ENCODE measurements at regions of chr1 and their contacts with region 1.

Region 1: DNA sequence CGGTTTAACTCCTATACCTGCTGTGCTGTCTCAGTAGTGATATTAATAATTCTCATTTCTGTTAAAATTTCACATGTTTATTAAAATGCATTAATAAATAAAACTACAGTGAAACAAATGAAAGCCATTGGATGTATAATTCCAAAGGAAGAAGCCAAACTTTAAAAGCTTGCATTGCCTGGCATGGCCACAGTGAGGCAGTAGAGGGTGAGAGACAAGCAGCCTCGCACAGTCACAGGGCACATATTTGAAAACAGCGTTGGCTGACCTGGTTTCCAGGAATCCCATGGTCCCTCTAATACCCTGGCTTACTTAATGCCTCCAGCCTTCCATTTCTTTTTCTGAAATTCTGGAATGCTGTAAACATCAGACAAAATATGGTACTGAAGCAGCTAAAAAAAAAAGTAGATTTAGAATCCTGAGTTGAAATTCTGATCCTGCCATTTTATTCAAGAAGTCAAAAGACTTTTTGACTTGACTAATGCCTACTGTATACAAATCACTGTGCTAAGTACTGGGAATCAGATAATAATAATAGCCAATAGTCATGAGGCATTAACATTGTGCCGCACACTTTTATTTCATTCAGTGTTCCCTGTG is 6.7 kb upstream of the RNASEL start:
- DNase-seq: peak; percentile 80
- H3K4me3 Mint-ChIP-seq: no peak overlapping the region
- H3K27ac Mint-ChIP-seq: no peak overlapping the region
- H3K4me1 Mint-ChIP-seq: peaks cover 6% of the 10 kb centered on the region
- H3K27me3 Mint-ChIP-seq: no peaks in the 10 kb centered on the region
- CTCF ChIP-seq: peak; percentile 92

Region 2: GRCh38 chr1:182446033-182446669 is 149.6 kb before region 1 on chr1:
- CTCF ChIA-PET with region 1: interaction called, 25 read pairs
- POLR2A ChIA-PET with region 1: interaction called, 3 read pairs
- intact Hi-C with region 1: loop called (anchors 1 kb)
- DNase-seq: peak; percentile 81
- H3K4me3 Mint-ChIP-seq: no peak overlapping the region
- H3K27ac Mint-ChIP-seq: no peak overlapping the region
- H3K4me1 Mint-ChIP-seq: peaks cover 6% of the 10 kb centered on the region
- H3K27me3 Mint-ChIP-seq: no peaks in the 10 kb centered on the region
- CTCF ChIP-seq: peak; percentile 89

Region 3: GRCh38 chr1:182457844-182458243 is 137.9 kb before region 1 on chr1:
- CTCF ChIA-PET with region 1: interaction called, 12 read pairs
- POLR2A ChIA-PET with region 1: no interaction called
- intact Hi-C with region 1: no loop called
- DNase-seq: no peak
- H3K4me3 Mint-ChIP-seq: no peak overlapping the region
- H3K27ac Mint-ChIP-seq: no peak overlapping the region
- H3K4me1 Mint-ChIP-seq: peaks cover 7% of the 10 kb centered on the region
- H3K27me3 Mint-ChIP-seq: peaks cover 25% of the 10 kb centered on the region
- CTCF ChIP-seq: no peak

Region 4: GRCh38 chr1:182527680-182528079 is 68.1 kb before region 1 on chr1:
- CTCF ChIA-PET with region 1: no interaction called
- POLR2A ChIA-PET with region 1: no interaction called
- intact Hi-C with region 1: no loop called
- DNase-seq: no peak
- H3K4me3 Mint-ChIP-seq: no peak overlapping the region
- H3K27ac Mint-ChIP-seq: no peak overlapping the region
- H3K4me1 Mint-ChIP-seq: no peaks in the 10 kb centered on the region
- H3K27me3 Mint-ChIP-seq: peaks cover 19% of the 10 kb centered on the region
- CTCF ChIP-seq: no peak

Region 5: DNA sequence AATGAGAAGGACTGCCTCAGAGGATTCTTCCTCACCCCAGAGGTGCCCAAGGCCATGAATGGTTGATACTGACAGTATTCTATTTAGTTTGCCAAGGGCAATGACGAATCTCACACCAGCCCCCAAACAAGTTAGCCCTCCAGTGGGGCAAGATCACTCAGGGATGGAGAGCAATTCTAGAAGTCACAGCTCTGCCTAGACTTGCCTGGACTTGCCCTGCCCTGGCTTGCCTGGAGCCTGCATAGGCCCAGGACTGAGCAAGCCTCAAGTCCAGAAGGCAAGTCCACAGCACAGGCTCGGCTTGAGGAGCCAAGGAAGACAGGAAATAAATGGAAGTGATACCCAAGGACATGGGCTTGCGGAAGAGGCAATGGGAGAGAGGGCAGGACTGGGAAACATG is 48.0 kb after region 1 on chr1:
- CTCF ChIA-PET with region 1: interaction called, 10 read pairs
- POLR2A ChIA-PET with region 1: no interaction called
- intact Hi-C with region 1: no loop called
- DNase-seq: peak; percentile 81
- H3K4me3 Mint-ChIP-seq: no peak overlapping the region
- H3K27ac Mint-ChIP-seq: peak overlapping the region; percentile 95
- H3K4me1 Mint-ChIP-seq: peaks cover 8% of the 10 kb centered on the region
- H3K27me3 Mint-ChIP-seq: no peaks in the 10 kb centered on the region
- CTCF ChIP-seq: no peak

Region 6: GRCh38 chr1:182795563-182796228 is 200.0 kb after region 1 on chr1:
- CTCF ChIA-PET with region 1: interaction called, 991 read pairs
- POLR2A ChIA-PET with region 1: interaction called, 151 read pairs
- intact Hi-C with region 1: no loop called
- DNase-seq: no peak
- H3K4me3 Mint-ChIP-seq: no peak overlapping the region
- H3K27ac Mint-ChIP-seq: no peak overlapping the region
- H3K4me1 Mint-ChIP-seq: no peaks in the 10 kb centered on the region
- H3K27me3 Mint-ChIP-seq: no peaks in the 10 kb centered on the region
- CTCF ChIP-seq: no peak

Region 7: DNA sequence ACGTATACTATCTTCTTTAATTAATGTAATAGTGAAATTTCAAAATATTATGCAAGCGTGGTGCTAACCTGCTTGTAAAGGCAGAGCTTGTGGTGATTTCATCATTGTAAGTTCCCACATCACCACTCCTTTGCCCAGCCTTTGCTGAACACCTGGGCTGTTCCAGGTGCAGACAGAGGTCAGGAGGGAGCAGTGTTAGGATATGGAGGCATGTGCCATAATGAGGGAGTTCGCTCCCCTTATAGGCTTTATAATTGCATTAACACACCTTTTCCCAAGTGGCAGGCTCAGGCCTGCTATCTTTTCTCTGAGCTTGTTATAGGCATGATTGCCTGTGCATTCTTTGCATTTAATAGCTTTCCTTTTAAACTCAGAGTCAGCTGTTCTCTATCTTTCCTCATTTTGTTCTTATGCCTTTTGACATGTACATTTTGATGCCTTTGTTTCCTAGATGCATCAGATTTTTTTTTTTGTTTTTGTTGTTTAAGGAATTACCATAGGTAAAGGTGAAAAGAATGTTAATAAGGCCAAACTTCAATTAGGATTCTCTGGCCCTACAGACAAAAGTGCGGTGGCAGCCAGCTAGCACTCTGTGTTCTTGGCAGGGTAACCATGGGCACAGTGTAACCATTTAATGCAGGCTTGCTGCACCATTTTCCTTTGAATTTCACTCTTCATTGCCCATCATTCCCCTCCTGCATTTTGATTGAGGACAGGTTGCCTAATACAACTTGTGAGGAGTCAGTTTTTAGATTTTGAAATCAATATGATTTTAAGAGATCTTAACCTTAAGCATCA is 206.5 kb after region 1 on chr1:
- CTCF ChIA-PET with region 1: interaction called, 16 read pairs
- POLR2A ChIA-PET with region 1: interaction called, 5 read pairs
- intact Hi-C with region 1: no loop called
- DNase-seq: peak; percentile 70
- H3K4me3 Mint-ChIP-seq: no peak overlapping the region
- H3K27ac Mint-ChIP-seq: peak overlapping the region; percentile 29
- H3K4me1 Mint-ChIP-seq: peaks cover 12% of the 10 kb centered on the region
- H3K27me3 Mint-ChIP-seq: no peaks in the 10 kb centered on the region
- CTCF ChIP-seq: no peak

Region 8: DNA sequence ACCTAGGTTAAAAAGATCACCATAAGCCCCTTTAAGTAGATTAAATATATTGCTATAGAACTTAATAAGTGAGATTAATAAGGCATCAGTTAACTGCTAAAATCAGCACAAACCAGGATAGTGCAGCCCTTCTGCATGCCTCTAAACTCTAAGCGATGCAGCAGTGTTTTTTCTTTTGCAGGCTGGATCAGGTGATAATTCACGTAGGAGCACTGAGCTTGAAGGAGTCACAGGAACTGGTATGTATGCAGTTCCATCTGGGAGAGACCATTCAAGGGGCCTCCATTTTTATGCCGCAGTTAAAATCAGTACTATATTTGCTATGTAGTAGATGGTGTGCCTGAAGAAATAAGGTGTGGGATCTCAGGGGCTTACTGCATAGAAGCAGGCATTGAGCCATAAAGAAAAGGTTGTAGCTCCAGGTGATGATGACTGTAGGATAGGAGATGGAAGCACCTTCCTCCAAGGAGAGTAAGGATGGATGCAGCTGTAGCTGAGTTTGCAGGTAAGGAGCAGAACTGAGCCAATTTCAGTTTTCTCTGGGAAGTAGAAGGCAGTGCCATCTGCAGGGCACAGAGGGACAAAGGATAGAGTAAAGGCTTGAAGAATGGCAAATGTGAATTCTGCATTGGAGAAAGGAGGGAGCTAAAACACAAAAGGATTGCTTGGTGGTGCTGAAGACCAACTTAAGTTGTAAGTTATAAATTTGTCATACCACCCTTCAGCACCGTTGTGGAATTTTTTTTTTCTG is 216.4 kb after region 1 on chr1:
- CTCF ChIA-PET with region 1: interaction called, 17 read pairs
- POLR2A ChIA-PET with region 1: no interaction called
- intact Hi-C with region 1: no loop called
- DNase-seq: peak; percentile 19
- H3K4me3 Mint-ChIP-seq: no peak overlapping the region
- H3K27ac Mint-ChIP-seq: no peak overlapping the region
- H3K4me1 Mint-ChIP-seq: peaks cover 6% of the 10 kb centered on the region
- H3K27me3 Mint-ChIP-seq: no peaks in the 10 kb centered on the region
- CTCF ChIP-seq: no peak

Measured in MCF 10A (cell line).